Ascending aorta (tissue), 2 donors: ENCODE measurements at regions of chr3 and their contacts with region 1.

Region 1: DNA sequence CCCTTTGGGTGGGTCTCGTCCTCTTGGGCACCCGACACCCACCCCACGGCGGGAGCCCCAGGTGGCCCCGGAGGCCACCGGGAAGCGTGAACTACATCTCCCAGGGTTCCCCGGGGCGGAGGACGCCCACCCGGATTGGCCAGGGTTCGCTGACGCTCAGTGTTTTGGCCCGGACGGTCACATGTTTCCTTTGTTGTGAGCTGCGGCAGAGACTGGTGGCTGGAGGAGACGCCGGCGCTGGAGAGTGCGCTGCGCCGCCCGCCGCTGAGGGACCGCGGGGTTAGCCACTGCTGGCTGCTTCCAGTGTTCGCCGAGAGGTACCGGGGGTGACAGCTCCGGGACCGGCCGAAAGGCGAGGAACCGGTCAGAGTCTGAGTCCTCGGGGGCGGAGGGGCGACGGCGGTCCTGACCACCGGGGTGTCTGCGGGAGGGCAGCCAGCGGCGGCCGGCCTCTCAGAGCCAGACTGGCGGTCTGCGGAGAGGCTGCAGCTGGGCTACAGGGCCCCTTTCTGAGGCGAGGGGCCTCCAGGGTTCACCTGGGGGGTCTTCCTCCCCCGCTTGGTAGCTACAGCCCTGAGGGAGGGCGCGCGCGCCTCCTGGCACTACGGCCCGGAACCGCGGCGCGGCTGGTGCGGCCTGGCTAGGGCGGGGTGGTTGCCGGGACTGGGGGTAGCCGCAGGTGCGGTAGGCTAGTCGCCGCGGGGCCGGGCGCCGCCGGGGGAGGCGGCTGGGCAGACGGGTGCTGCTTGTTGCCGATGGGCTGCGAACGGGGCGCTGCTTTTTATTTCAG is at the start of gene KLHL24:
- DNase-seq: peak; percentile 83 to 95
- H3K4me3 ChIP-seq: peak within 1 kb of the TSS; percentile 91 to 95
- H3K27ac ChIP-seq: peak within 1 kb of the TSS; percentile 92 to 100
- H3K4me1 ChIP-seq: peaks cover 0 to 16% of the 10 kb centered on the region in 2 donors
- H3K27me3 ChIP-seq: no peaks in the 10 kb centered on the region
- CTCF ChIP-seq: peak in 1 of 3 experiments; percentile 6
- total RNA-seq, gene KLHL24: 26.6 TPM

Region 2: GRCh38 chr3:182792901-182793662 is 842.5 kb before region 1 on chr3 and contains the start of gene ATP11B:
- intact Hi-C with region 1: loop called (anchors 5 kb)
- DNase-seq: peak; percentile 23 to 83
- H3K4me3 ChIP-seq: peak within 1 kb of the TSS; percentile 74 to 89
- H3K27ac ChIP-seq: peak within 1 kb of the TSS; percentile 85 to 96
- H3K4me1 ChIP-seq: peaks cover 0 to 18% of the 10 kb centered on the region in 2 donors
- H3K27me3 ChIP-seq: no peaks in the 10 kb centered on the region
- CTCF ChIP-seq: no peak
- total RNA-seq, gene ATP11B: 117 TPM

Region 3: GRCh38 chr3:183285828-183286457 is 349.7 kb before region 1 on chr3:
- intact Hi-C with region 1: loop called (anchors 5 kb)
- DNase-seq: peak; percentile 90 to 97
- H3K4me3 ChIP-seq: no peak overlapping the region
- H3K27ac ChIP-seq: peak overlapping the region; percentile 83 to 89
- H3K4me1 ChIP-seq: peaks cover 5 to 27% of the 10 kb centered on the region in 2 donors
- H3K27me3 ChIP-seq: no peaks in the 10 kb centered on the region
- CTCF ChIP-seq: no peak

Region 4: GRCh38 chr3:183447206-183448001 is 188.2 kb before region 1 on chr3:
- intact Hi-C with region 1: loop called (anchors 10 kb)
- DNase-seq: peak; percentile 21 to 87
- H3K4me3 ChIP-seq: peak overlapping the region; percentile 64 to 95
- H3K27ac ChIP-seq: peak overlapping the region; percentile 30 to 71
- H3K4me1 ChIP-seq: peaks cover 3 to 4% of the 10 kb centered on the region in 2 donors
- H3K27me3 ChIP-seq: no peaks in the 10 kb centered on the region
- CTCF ChIP-seq: no peak

Region 5: DNA sequence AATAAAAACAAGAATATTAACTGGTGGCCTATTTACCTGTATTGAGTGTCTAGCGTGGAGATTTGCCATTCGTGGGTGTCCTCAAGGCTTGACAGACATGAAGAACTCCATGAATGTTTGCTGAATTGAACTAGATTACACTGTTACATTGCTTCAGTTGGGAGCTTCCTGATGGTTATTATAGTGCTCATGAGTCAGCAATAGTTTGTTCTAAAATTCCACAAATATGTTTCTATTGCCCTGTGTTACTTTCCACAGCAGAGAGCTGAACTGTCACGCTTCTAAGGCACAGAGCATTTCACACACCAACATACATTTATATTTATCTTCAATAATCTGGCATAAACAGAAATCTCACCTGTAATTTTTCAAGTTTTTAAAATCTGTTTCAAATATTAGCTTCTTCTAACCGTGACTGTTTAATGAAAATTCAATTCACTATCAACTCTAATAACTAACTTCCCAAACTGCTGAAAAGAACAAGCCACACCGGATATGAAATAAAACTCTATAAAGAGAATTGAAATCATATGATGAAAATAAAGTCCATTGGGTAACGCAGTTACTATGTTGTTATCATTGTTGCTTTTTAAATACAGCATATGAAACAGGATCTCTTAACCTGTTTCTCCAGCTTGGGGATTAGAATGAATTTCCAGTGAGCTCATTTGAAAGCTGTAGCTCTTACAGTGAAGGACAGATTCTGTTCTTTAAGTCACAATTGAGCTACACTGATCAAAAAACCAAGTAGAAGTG is 146.0 kb before region 1 on chr3:
- intact Hi-C with region 1: no loop called
- DNase-seq: no peak
- H3K4me3 ChIP-seq: no peak overlapping the region
- H3K27ac ChIP-seq: no peak overlapping the region
- H3K4me1 ChIP-seq: no peaks in the 10 kb centered on the region
- H3K27me3 ChIP-seq: no peaks in the 10 kb centered on the region
- CTCF ChIP-seq: no peak

Region 6: DNA sequence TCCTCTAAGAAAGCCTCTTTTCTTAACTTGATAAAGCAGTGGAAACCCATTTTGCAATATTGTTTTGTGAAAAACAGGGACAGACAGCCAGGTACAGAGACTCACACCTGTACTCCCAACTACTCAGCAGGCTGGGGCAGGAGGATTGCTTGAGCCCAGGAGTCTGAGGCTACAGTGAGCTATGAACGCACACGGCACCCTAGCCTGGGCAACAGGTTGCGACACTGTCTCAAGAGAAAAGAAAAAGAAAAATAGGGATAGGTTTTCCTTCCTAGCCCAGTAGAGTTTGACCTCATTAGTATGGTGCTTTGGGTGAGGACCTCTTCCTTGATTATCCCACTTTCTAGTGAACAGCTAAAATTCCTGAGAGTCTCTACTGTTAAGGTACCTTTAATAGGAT is 44.4 kb after region 1 on chr3:
- intact Hi-C with region 1: no loop called
- DNase-seq: no peak
- H3K4me3 ChIP-seq: no peak overlapping the region
- H3K27ac ChIP-seq: no peak overlapping the region
- H3K4me1 ChIP-seq: no peaks in the 10 kb centered on the region
- H3K27me3 ChIP-seq: no peaks in the 10 kb centered on the region
- CTCF ChIP-seq: no peak

Region 7: GRCh38 chr3:183697610-183698317 is 62.1 kb after region 1 on chr3 and contains the start of gene YEATS2:
- intact Hi-C with region 1: loop called (anchors 1 kb)
- DNase-seq: peak in 1 of 2 donors; percentile 78
- H3K4me3 ChIP-seq: peak within 1 kb of the TSS; percentile 71 to 88
- H3K27ac ChIP-seq: peak within 1 kb of the TSS; percentile 86 to 89
- H3K4me1 ChIP-seq: peaks cover 0 to 15% of the 10 kb centered on the region in 2 donors
- H3K27me3 ChIP-seq: no peaks in the 10 kb centered on the region
- CTCF ChIP-seq: no peak
- total RNA-seq, gene YEATS2: 29.2 TPM

Region 8: DNA sequence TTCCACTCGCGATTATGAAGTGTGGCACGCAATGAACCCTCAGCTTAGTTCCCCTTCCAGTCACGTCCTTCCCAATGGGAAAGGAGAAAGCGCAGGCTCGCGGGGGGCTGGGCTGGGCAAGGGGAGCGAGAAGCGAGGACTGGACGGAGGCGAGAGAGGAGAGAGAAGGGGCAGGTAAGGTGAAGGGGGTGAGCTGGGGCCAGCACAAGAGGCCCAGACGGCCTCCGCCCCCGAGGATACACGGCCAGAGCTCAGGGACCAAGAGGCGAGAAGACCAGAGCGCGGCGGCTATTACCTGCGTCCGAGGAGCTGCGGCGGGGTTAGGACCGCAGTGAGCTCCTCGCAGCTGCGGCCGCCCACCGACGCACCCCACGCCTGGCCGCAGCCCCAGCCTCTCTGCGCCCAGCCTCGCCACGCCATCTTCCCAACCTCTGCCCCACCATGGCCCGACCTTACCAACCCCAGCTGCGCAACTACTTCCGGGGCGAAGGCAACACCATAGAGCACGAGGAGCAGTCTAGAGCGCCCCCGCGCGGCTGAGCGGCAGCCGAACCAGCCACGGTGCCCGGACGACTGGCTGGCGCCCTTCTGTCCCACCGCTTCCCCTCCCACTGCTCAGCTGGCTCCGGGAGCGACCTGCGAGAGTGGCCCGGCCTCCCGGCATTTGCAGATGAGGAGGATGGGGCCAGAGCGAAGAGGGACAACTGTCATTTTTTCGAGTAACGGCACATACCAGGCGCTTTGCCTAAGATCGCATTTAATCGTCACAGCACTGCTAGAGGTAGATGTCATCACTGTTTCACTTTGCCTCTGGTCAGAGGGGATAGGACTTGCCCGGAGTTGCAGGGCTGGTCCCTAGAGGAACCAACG is 249.0 kb after region 1 on chr3 and contains the start of gene PARL:
- intact Hi-C with region 1: loop called (anchors 2 kb)
- DNase-seq: peak; percentile 80 to 98
- H3K4me3 ChIP-seq: peak within 1 kb of the TSS; percentile 89 to 90
- H3K27ac ChIP-seq: peak within 1 kb of the TSS; percentile 75 to 81
- H3K4me1 ChIP-seq: peaks cover 0 to 21% of the 10 kb centered on the region in 2 donors
- H3K27me3 ChIP-seq: no peaks in the 10 kb centered on the region
- CTCF ChIP-seq: peak; percentile 89 to 92 (median 92)
- total RNA-seq, gene PARL: 14.3 TPM